Mammary epithelial cell (primary cell): ENCODE measurements at regions of chr4 and their contacts with region 1.

Region 1: DNA sequence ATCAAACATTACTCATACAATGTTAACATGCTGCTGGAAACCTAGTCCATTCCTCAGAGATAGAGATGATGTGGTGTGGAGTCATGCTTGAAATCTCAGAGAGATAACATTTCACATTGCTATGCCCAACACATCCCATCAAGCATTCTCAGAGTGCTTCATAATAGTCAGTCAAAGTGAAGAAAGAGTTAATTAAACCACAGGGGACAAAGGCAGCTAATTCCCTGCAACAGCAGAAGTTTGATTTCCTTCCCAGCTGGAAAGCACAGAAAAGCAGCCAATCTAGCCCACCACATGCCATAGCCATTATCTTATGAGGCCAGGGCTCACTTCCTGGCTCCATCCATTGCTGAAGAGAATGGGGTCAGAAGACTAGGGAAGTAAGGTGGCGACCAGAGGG is 8.9 kb downstream of the KDR start:
- DNase-seq: no peak
- H3K4me3 ChIP-seq: no peak overlapping the region
- H3K27ac ChIP-seq: no peak overlapping the region
- H3K4me1 ChIP-seq: no peaks in the 10 kb centered on the region
- H3K27me3 ChIP-seq: no peaks in the 10 kb centered on the region
- CTCF ChIP-seq: no peak

Region 2: DNA sequence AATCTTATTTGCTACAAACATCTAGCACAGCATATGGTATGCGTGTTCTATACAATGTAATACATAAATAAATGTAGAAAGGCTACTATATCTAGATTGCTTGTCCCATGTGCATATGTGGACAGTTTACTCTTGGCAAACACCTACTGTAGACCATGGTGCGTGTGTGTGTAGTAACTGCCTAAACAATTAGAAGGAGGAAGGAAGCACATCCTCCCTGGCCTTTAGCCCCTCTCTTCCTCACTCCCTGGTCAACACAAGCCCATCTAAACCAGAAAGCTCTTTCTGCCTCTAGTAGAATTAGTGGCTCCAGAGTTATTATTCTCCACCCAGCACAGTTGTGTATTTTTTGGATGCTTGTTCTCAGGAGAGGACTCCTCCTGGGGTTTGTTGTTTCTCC is 64.9 kb before region 1 on chr4:
- CTCF ChIA-PET with region 1: no interaction called
- dilution Hi-C with region 1: no loop called
- in situ Hi-C with region 1: no loop called
- intact Hi-C with region 1: loop called (anchors 10 kb)
- DNase-seq: no peak
- H3K4me3 ChIP-seq: no peak overlapping the region
- H3K27ac ChIP-seq: no peak overlapping the region
- H3K4me1 ChIP-seq: no peaks in the 10 kb centered on the region
- H3K27me3 ChIP-seq: no peaks in the 10 kb centered on the region
- CTCF ChIP-seq: no peak

Region 3: DNA sequence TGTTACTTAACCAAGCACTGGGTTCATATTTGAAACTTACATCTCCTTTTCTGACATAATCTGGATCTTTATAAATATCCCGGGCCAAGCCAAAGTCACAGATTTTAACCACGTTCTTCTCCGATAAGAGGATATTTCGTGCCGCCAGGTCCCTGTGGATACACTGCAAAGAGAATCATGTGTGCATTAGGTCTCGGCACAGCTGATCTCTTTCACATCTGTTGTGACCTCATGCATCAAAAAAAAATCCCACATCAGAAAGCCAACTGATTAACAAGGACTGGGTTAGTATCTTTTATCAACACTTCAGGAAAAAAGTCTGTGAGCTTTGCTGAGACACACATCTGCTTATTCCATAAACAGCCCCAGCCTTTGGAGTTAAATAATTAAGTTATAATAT is 26.5 kb before region 1 on chr4:
- CTCF ChIA-PET with region 1: no interaction called
- dilution Hi-C with region 1: no loop called
- in situ Hi-C with region 1: no loop called
- intact Hi-C with region 1: no loop called
- DNase-seq: no peak
- H3K4me3 ChIP-seq: no peak overlapping the region
- H3K27ac ChIP-seq: no peak overlapping the region
- H3K4me1 ChIP-seq: no peaks in the 10 kb centered on the region
- H3K27me3 ChIP-seq: no peaks in the 10 kb centered on the region
- CTCF ChIP-seq: no peak